ENCODE measurements at regions of chr9 and their contacts with region 1.

Region 1: GRCh38 chr9:107340920-107341632 is 58.0 kb downstream of the RAD23B start:
- DNase-seq: peak; percentile 60 to 91 (median 82)
- ATAC-seq: peak; percentile 74
- H3K4me3 ChIP-seq: no peak overlapping the region
- H3K4me3 Mint-ChIP-seq: no peak overlapping the region
- H3K27ac ChIP-seq: no peak overlapping the region
- H3K27ac Mint-ChIP-seq: no peak overlapping the region
- H3K4me1 ChIP-seq: no peaks in the 10 kb centered on the region
- H3K4me1 Mint-ChIP-seq: peaks cover 8% of the 10 kb centered on the region
- H3K27me3 ChIP-seq: no peaks in the 10 kb centered on the region
- H3K27me3 Mint-ChIP-seq: no peaks in the 10 kb centered on the region
- CTCF ChIP-seq: peak; percentile 90

Region 2: DNA sequence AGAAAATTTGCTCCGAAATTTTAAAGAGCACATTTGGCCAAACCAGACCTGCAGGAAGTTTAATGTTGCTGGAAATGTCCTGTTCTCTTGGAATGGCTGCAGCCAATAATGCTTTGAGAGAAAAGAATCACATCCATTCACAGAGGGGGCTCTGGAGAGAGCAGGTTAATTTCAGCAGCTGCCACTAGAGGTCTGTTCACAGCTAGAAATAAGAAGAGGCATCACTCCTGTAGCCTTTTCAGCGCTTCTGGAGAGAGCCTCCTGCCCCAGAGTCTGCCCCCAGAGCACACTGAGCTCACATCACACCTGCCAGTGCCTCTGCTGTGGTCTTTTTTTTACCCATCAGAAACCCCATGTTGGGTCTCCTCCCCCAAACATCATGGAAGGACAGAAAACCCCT is 182.8 kb before region 1 on chr9:
- CTCF ChIA-PET with region 1: interaction called, 7 read pairs
- POLR2A ChIA-PET with region 1: no interaction called
- intact Hi-C with region 1: loop called in 1 of 2 experiments (anchors 5 kb)
- DNase-seq: peak in 2 of 9 experiments; percentile 9 to 19
- ATAC-seq: no peak
- H3K4me3 ChIP-seq: no peak overlapping the region
- H3K4me3 Mint-ChIP-seq: no peak overlapping the region
- H3K27ac ChIP-seq: no peak overlapping the region
- H3K27ac Mint-ChIP-seq: no peak overlapping the region
- H3K4me1 ChIP-seq: no peaks in the 10 kb centered on the region
- H3K4me1 Mint-ChIP-seq: no peaks in the 10 kb centered on the region
- H3K27me3 ChIP-seq: no peaks in the 10 kb centered on the region
- H3K27me3 Mint-ChIP-seq: peaks cover 13% of the 10 kb centered on the region
- CTCF ChIP-seq: no peak

Region 3: DNA sequence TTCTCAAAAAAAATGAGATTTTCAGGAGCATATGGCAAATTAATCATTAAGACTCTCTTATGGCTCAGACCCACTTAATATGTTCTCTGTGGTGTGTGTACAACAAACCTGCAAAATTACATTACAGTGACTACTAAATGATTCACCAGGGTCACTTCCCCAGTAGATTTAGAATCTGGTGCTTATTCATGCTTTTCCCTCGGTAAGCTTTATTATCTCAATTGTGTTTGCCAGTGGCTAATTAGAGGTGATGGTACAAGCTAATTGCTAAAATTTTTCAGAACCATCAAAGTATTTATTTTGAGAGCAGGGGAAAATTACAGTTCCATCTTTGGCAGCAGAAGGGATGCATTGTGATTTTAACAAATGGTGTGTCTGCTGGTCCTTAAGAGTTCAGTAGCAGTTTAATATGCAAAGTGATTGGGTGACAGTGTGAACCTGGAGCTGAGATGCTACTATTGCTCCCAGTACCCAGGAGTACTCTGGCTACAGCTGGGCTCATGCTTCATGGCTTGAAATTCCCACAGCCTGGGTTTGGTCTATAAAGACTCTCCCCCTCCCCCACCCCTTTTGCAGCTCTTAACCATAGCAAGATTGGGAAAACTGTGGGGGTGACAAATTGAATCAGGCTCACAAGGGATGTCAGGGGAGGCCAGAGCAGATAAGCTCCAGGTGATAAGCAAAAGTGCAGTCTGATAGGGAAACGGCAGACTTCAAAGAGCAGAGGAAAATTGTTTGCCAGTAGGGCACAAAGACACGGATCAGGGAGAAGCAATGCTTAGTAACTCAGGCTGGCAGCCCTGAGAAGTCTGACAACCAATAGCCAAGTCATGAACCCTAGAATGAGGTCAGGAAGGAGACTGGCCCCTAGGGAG is 150.8 kb before region 1 on chr9:
- CTCF ChIA-PET with region 1: interaction called, 15 read pairs
- POLR2A ChIA-PET with region 1: no interaction called
- intact Hi-C with region 1: no loop called
- DNase-seq: no peak
- ATAC-seq: no peak
- H3K4me3 ChIP-seq: no peak overlapping the region
- H3K4me3 Mint-ChIP-seq: no peak overlapping the region
- H3K27ac ChIP-seq: no peak overlapping the region
- H3K27ac Mint-ChIP-seq: no peak overlapping the region
- H3K4me1 ChIP-seq: no peaks in the 10 kb centered on the region
- H3K4me1 Mint-ChIP-seq: no peaks in the 10 kb centered on the region
- H3K27me3 ChIP-seq: peaks cover 0 to 3% of the 10 kb centered on the region in 2 experiments
- H3K27me3 Mint-ChIP-seq: peaks cover 7% of the 10 kb centered on the region
- CTCF ChIP-seq: no peak

Region 4: GRCh38 chr9:107269681-107270080 is 71.4 kb before region 1 on chr9:
- CTCF ChIA-PET with region 1: interaction called, 11 read pairs
- POLR2A ChIA-PET with region 1: no interaction called
- intact Hi-C with region 1: no loop called
- DNase-seq: no peak
- ATAC-seq: no peak
- H3K4me3 ChIP-seq: no peak overlapping the region
- H3K4me3 Mint-ChIP-seq: no peak overlapping the region
- H3K27ac ChIP-seq: no peak overlapping the region
- H3K27ac Mint-ChIP-seq: no peak overlapping the region
- H3K4me1 ChIP-seq: no peaks in the 10 kb centered on the region
- H3K4me1 Mint-ChIP-seq: no peaks in the 10 kb centered on the region
- H3K27me3 ChIP-seq: no peaks in the 10 kb centered on the region
- H3K27me3 Mint-ChIP-seq: peaks cover 13% of the 10 kb centered on the region
- CTCF ChIP-seq: no peak

Region 5: DNA sequence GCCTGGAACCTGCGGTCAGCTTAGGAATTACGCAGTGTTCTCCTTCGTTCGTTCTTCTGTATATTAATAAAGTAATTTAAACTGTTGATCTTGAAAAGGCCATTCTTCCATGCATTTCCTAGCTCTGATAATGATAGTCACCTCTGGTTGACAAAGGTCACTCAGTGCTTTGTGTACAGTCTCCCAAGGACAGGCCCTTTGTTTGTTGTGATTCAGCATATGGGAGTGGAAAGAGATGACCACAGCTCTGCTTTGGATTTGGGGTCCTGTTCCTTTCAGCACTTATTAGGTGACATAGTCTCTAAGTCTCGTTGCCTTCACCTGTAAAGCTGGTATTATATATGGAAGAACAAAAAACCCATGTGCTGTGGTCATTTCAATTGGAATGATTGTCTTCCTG is 18.4 kb before region 1 on chr9:
- CTCF ChIA-PET with region 1: interaction called, 30 read pairs
- POLR2A ChIA-PET with region 1: no interaction called
- intact Hi-C with region 1: no loop called
- DNase-seq: no peak
- ATAC-seq: no peak
- H3K4me3 ChIP-seq: no peak overlapping the region
- H3K4me3 Mint-ChIP-seq: no peak overlapping the region
- H3K27ac ChIP-seq: no peak overlapping the region
- H3K27ac Mint-ChIP-seq: no peak overlapping the region
- H3K4me1 ChIP-seq: peaks cover 5% of the 10 kb centered on the region
- H3K4me1 Mint-ChIP-seq: peaks cover 26% of the 10 kb centered on the region
- H3K27me3 ChIP-seq: no peaks in the 10 kb centered on the region
- H3K27me3 Mint-ChIP-seq: no peaks in the 10 kb centered on the region
- CTCF ChIP-seq: no peak